Activated B cell treated with CpG ODN at 0.5 μM for 24 hours (primary cell): ENCODE measurements at regions of chr4 and their contacts with region 1.

Region 1: GRCh38 chr4:86497980-86498862 is 95.9 kb upstream of the PTPN13 start:
- DNase-seq: no peak
- ATAC-seq: peak; percentile 62
- H3K4me3 Mint-ChIP-seq: no peak overlapping the region
- H3K27ac Mint-ChIP-seq: no peak overlapping the region
- H3K4me1 Mint-ChIP-seq: no peaks in the 10 kb centered on the region
- H3K27me3 Mint-ChIP-seq: peaks cover 11% of the 10 kb centered on the region
- CTCF ChIP-seq: peak; percentile 38

Region 2: GRCh38 chr4:86895692-86896488 is 397.7 kb after region 1 on chr4:
- CTCF ChIA-PET with region 1: interaction called, 16 read pairs
- POLR2A ChIA-PET with region 1: no interaction called
- intact Hi-C with region 1: loop called (anchors 1 kb)
- DNase-seq: no peak
- ATAC-seq: no peak
- H3K4me3 Mint-ChIP-seq: no peak overlapping the region
- H3K27ac Mint-ChIP-seq: no peak overlapping the region
- H3K4me1 Mint-ChIP-seq: peaks cover 9% of the 10 kb centered on the region
- H3K27me3 Mint-ChIP-seq: peaks cover 18% of the 10 kb centered on the region
- CTCF ChIP-seq: peak; percentile 79

Region 3: DNA sequence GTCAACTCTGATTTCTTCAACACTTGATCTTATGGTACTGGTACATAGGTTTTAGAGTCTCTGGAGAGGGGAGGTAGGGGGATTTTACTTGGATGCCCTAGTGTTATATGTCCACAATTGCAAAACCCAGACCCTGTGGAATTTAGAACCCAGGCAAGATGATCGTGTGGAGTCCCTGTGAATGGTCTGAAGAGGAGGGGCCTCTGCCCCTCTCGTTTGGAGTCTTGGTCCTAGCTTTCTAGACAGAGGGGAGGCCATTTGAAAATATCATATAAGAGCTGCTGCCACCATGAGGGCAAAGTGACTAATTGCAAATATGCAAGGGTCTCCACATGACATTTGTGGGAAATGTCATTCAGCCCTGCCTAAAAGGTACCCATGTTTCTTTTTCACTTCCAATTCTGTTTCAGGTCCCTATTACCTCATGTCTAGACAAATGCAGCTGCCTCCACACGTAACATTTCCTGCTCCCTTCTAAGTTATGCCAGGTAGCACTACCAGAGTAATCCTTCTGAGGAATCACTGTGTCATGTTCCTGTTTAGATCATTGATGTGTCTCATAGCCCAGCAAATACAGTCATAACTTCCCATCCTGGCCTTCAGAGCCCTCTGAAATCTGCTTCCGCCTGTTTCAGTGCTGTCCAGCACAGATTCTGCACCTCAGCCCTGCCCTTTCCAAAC is 595.4 kb after region 1 on chr4:
- CTCF ChIA-PET with region 1: interaction called, 4 read pairs
- POLR2A ChIA-PET with region 1: no interaction called
- intact Hi-C with region 1: loop called (anchors 5 kb)
- DNase-seq: no peak
- ATAC-seq: peak; percentile 89
- H3K4me3 Mint-ChIP-seq: no peak overlapping the region
- H3K27ac Mint-ChIP-seq: peak overlapping the region; percentile 62
- H3K4me1 Mint-ChIP-seq: peaks cover 20% of the 10 kb centered on the region
- H3K27me3 Mint-ChIP-seq: no peaks in the 10 kb centered on the region
- CTCF ChIP-seq: peak; percentile 15

Region 4: GRCh38 chr4:87235020-87235671 is 736.9 kb after region 1 on chr4:
- CTCF ChIA-PET with region 1: interaction called, 4 read pairs
- POLR2A ChIA-PET with region 1: no interaction called
- intact Hi-C with region 1: loop called (anchors 1 kb)
- DNase-seq: no peak
- ATAC-seq: no peak
- H3K4me3 Mint-ChIP-seq: peak overlapping the region; percentile 80
- H3K27ac Mint-ChIP-seq: no peak overlapping the region
- H3K4me1 Mint-ChIP-seq: peaks cover 3% of the 10 kb centered on the region
- H3K27me3 Mint-ChIP-seq: peaks cover 1% of the 10 kb centered on the region
- CTCF ChIP-seq: no peak

Region 5: DNA sequence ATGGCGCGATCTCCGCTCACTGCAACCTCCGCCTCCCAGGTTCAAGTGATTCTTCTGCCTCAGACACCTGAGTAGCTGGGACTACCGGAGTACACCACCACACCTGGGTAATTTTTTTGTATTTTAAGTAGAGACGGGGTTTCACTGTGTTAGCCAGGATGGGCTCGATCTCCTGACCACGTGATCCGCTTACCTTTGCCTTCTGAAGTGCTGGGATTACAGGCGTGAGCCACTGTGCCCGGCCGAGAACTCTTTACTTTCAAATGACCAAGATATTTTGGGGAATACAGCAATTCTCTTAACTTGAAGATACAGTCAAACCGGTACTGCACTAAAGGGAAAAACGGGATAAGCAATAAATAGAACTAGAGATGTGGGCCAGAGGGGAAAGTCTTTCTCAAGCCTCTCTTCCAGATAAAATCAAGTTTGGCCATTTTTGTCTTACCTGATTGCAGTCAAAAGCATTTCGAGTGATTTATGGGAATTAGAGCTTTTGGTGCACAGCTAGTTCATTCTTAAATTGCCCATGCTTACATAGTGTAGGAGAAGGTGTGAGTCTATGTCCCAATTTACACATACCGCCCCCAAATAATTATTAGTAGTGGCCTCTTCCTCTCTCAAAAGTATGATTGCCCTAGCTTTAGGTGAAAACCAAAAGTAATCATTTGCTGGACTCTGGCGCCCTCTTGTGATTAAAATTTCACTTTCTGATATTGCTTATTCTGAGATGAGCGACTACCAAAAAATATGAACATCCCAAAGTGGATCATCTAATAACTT is 1713.4 kb after region 1 on chr4:
- CTCF ChIA-PET with region 1: no interaction called
- POLR2A ChIA-PET with region 1: no interaction called
- intact Hi-C with region 1: loop called (anchors 10 kb)
- DNase-seq: no peak
- ATAC-seq: peak; percentile 37
- H3K4me3 Mint-ChIP-seq: no peak overlapping the region
- H3K27ac Mint-ChIP-seq: no peak overlapping the region
- H3K4me1 Mint-ChIP-seq: no peaks in the 10 kb centered on the region
- H3K27me3 Mint-ChIP-seq: peaks cover 7% of the 10 kb centered on the region
- CTCF ChIP-seq: peak; percentile 21